Activated CD4-positive, alpha-beta T cell treated with anti-CD3 and anti-CD28 coated beads, Interleukin-2, amount 10 ng/mL, durations not matched to agents 24 days and 14 days (primary cell): ENCODE measurements at regions of chr9 and their contacts with region 1.

Region 1: DNA sequence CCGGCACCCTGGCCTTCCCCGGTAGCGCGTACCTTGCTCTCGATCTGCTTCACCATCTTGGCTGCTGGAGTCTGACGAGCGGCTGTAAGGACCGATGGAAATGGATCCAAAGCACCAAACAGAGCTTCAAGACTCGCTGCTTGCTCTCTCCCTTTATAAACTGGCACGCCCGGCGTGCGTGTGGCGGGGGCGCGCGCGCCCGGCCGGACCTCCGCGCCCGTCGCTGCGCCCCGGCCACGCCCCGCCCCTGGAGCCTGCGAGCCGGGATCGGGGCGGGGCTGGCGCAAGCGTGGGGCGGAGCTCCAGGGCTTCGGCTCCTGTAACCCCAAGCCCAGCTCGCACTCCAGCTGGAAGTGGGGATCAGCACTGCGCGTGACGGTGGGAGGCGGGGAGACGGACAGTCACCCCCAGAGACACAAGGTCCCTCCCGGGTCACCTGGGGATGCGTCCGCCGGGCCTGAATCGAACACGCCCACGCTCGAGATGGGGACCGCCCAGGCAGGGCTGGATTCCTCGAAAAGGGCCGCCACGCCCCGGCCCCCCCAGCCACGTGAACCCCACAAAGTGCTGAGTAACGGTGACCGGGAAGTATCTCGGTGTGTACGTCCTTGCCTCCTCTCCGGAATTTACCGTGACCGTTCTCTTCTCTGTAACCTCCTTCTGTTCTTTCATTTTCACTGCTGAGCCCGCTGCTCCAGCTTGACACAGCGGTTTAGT is at the start of gene TXN:
- DNase-seq: peak; percentile 96
- H3K4me3 Mint-ChIP-seq: peak within 1 kb of the TSS; percentile 96
- H3K27ac Mint-ChIP-seq: peak within 1 kb of the TSS; percentile 99
- H3K4me1 Mint-ChIP-seq: peaks cover 43% of the 10 kb centered on the region
- H3K27me3 Mint-ChIP-seq: peaks cover 4% of the 10 kb centered on the region
- total RNA-seq, gene TXN: 463 TPM in 2 replicates

Region 2: GRCh38 chr9:108933718-108934322 is 1322.7 kb before region 1 on chr9 and contains the start of gene ELP1:
- intact Hi-C with region 1: loop called (anchors 10 kb)
- DNase-seq: peak; percentile 98
- H3K4me3 Mint-ChIP-seq: peak within 1 kb of the TSS; percentile 97
- H3K27ac Mint-ChIP-seq: peak within 1 kb of the TSS; percentile 99
- H3K4me1 Mint-ChIP-seq: peaks cover 26% of the 10 kb centered on the region
- H3K27me3 Mint-ChIP-seq: no peaks in the 10 kb centered on the region
- total RNA-seq, gene ELP1: 35.2 and 36.2 TPM in 2 replicates

Region 3: DNA sequence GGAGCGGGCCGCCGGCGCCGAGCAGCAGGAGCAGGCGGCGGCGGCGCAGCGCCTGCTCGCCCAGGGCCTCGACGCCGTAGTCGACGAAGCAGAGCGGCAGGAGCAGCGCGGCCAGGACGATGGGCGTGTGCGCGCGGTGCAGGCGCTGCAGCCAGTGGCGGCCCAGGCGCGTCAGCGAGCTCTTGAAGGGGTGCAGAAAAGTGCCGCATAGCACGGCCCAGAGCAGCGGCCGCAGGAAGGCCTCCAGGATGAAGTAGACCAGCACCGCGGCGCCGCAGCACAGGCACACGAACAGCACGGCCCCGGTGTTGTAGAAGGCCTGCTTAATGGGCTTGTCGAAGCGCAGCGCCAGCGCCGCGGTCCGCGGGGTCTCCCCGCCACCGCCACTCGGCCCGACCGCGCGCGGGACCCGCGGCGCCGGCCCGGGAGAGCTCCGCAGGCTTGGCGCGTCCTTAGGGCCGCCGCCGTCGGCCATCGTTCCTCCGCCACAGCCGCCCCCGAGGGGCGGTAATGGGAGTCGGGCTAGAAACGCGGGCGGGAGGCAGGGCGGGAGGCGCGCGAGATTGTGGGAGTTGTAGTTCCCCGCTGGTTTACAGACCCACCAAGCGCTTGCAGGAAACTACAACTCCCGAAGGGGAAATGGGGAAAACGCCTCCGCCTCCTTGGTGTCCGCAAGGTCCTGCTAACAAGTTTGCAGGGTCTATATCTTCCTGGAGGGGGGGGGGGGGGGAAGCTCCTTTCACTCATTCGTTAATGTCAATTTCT is 1136.9 kb before region 1 on chr9 and contains the start of gene TMEM245:
- intact Hi-C with region 1: loop called (anchors 10 kb)
- DNase-seq: peak; percentile 98
- H3K4me3 Mint-ChIP-seq: peak within 1 kb of the TSS; percentile 90
- H3K27ac Mint-ChIP-seq: peak within 1 kb of the TSS; percentile 94
- H3K4me1 Mint-ChIP-seq: peaks cover 38% of the 10 kb centered on the region
- H3K27me3 Mint-ChIP-seq: no peaks in the 10 kb centered on the region
- total RNA-seq, gene TMEM245: 26.7 and 27.0 TPM in 2 replicates

Region 4: DNA sequence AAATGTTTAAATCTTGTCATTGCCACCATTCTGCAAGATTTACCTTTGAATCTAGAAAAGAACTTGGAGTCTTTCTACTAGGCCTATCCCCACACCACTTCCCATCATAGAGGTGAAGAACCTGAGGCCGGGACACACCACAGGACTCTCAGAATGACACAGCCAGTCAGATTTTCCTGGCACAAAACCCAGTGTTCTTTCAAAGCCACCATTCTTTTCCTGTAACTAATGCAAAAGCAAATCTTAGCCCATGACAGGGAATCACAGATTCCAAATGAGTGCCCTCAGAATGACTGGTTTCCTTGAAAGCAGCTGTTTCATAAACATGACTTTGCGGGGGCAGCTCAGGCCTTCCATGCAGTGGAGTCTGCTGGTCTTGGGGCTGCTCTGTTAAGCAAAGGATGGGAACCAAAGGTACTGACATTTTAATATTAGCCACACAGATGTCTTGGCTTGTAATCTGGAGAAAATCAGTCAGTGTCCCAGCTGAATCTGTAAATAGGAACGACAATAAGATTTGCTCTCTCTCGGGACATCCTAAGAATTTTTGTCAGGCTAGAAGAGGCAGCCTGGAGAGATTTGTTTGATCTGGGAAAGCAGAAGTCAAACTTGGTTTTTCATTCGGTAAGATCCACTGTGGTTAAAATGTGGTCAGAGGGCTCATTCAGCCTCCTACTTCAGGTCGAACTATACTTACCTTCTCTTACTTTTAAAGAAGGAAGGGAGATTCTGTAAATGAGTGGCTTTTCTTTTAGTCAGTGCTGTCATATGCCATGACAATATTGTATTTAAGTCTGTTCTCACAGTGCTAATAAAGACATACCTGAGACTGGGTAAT is 361.4 kb before region 1 on chr9:
- intact Hi-C with region 1: loop called (anchors 1 kb)
- DNase-seq: peak; percentile 80
- H3K4me3 Mint-ChIP-seq: peak overlapping the region; percentile 56
- H3K27ac Mint-ChIP-seq: peak overlapping the region; percentile 92
- H3K4me1 Mint-ChIP-seq: peaks cover 53% of the 10 kb centered on the region
- H3K27me3 Mint-ChIP-seq: no peaks in the 10 kb centered on the region

Region 5: DNA sequence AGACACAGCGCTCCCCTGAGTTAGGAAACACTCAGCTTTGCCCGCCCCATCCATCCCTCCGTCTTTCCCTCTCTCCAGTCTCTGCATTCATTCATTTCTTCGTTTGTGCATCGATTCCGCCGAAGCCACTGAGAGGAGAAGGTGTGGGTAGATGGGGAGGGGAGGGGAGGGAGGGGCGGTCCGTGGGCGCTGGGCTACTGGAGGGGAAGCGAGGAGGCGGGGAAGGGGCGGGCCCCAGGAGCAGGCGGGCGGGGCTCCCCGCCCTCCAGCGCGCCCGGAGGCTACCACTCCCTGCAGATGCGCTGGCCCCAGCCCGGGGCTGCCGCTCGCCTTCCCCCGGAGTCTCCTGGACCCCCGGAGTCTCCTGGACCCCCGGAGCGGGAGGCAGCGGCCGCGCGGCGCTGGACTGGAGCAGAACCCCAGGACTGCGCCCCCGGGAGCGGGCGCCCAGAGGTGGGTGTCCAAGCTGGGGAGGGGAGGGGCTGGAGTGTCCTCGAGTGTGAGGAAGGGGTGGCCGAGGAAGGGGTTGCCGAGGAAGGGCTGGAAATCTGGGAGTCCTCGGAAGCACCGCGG is 208.0 kb before region 1 on chr9:
- intact Hi-C with region 1: loop called (anchors 2 kb)
- DNase-seq: peak; percentile 95
- H3K4me3 Mint-ChIP-seq: peak overlapping the region; percentile 98
- H3K27ac Mint-ChIP-seq: peak overlapping the region; percentile 93
- H3K4me1 Mint-ChIP-seq: peaks cover 40% of the 10 kb centered on the region
- H3K27me3 Mint-ChIP-seq: peaks cover 8% of the 10 kb centered on the region